Activated naive CD4-positive, alpha-beta T cell treated with anti-CD3 and anti-CD28 coated beads for 36 hours (primary cell): ENCODE measurements at regions of chr11 and their contacts with region 1.

Region 1: DNA sequence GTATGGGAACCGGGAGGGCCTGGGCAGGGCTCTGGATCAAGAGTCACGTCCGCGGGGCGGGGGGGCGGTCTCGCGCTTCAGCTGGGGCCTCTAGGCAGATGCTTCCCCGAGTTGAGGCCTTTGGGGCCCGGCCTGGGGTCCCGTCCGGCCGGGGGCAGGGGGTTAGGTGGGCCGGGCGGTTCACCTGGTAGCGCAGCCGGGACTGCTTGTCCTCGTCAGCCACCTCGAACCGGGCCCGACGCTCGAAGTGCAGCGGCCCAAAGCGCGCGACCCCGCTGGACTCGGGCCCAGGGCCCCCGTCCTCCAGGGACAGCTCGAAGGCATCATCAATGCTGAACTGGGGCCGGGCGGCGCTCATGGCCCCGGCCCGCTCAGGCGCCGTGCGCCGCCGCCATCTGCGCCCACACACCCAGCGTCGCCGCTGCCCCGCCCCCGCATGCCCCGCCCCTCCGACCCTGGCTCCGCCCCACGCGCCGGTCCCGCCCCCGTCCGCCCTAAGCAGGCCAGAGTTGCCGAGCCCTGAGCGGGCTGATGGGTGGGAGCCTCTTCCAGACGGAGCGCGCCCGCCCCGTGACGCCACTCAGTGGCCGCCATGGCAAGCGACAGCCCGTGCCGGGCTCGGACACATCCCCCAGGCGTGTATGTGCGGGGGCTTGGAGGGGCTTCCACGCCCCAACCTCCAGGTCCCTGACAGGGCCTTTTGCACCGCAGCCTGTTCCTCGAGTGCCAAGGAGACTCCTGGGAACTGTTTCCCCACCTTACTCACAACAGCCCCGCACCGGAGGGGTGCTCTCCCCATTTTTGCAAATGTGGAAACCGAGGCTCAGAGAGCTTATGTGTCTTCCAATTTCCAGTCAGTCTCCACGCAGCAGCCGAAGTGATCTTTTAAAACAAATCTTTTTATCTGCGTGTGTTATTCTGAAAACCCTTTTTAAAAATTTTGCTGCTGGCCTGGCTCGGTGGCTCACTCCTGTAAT is at the start of gene TMEM134:
- DNase-seq: peak; percentile 92
- H3K4me3 Mint-ChIP-seq: peak within 1 kb of the TSS; percentile 80
- H3K27ac Mint-ChIP-seq: peak within 1 kb of the TSS; percentile 86
- H3K4me1 Mint-ChIP-seq: peaks cover 33% of the 10 kb centered on the region
- H3K27me3 Mint-ChIP-seq: no peaks in the 10 kb centered on the region
- total RNA-seq, gene TMEM134: 52.6 to 56.1 TPM

Region 2: GRCh38 chr11:67391304-67392132 is 77.6 kb before region 1 on chr11 and contains the start of gene RAD9A:
- CTCF ChIA-PET with region 1: interaction called, 3 read pairs
- intact Hi-C with region 1: loop called (anchors 1 kb)
- DNase-seq: peak; percentile 93
- H3K4me3 Mint-ChIP-seq: peak within 1 kb of the TSS; percentile 86
- H3K27ac Mint-ChIP-seq: peak within 1 kb of the TSS; percentile 51
- H3K4me1 Mint-ChIP-seq: peaks cover 31% of the 10 kb centered on the region
- H3K27me3 Mint-ChIP-seq: no peaks in the 10 kb centered on the region
- total RNA-seq, gene RAD9A: 29.5 to 30.7 TPM

Region 3: GRCh38 chr11:67428052-67428914 is 40.8 kb before region 1 on chr11 and contains the start of gene RPS6KB2:
- CTCF ChIA-PET with region 1: no interaction called
- intact Hi-C with region 1: loop called (anchors 2 kb)
- DNase-seq: peak; percentile 100
- H3K4me3 Mint-ChIP-seq: peak within 1 kb of the TSS; percentile 98
- H3K27ac Mint-ChIP-seq: peak within 1 kb of the TSS; percentile 97
- H3K4me1 Mint-ChIP-seq: peaks cover 34% of the 10 kb centered on the region
- H3K27me3 Mint-ChIP-seq: no peaks in the 10 kb centered on the region
- total RNA-seq, gene RPS6KB2: 50.7 to 51.2 TPM

Region 4: DNA sequence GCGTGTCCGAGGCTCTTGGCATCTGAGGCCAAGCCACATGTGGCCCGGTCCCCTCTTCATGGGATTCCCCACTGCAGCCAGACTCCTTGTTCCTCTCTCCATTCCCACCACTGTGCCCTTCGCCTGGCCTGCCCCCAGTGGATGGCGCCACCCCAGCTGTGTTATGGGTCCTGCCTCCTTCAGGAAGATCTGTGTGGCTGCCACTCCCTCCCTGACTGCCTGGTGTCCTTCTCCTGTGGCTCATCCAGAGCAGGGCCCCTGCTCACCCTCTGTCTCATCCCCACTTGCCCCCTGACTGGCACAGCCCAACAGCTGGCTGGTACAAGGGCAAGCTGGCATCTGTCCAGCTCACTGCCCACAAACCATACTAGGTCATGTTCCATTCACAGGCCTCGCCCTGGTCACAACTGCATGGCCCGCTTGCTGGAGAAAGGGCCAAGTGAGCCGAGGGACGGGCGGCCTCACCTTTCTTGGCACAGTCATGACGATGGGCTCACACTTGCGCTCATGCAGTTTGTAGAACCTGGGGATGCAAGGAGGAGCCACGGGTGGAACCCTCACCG is 29.7 kb before region 1 on chr11:
- CTCF ChIA-PET with region 1: interaction called, 20 read pairs
- intact Hi-C with region 1: loop called (anchors 1 kb)
- DNase-seq: peak; percentile 77
- H3K4me3 Mint-ChIP-seq: peak overlapping the region; percentile 90
- H3K27ac Mint-ChIP-seq: peak overlapping the region; percentile 95
- H3K4me1 Mint-ChIP-seq: peaks cover 55% of the 10 kb centered on the region
- H3K27me3 Mint-ChIP-seq: no peaks in the 10 kb centered on the region

Region 5: GRCh38 chr11:67447848-67448609 is 21.1 kb before region 1 on chr11:
- CTCF ChIA-PET with region 1: no interaction called
- intact Hi-C with region 1: loop called (anchors 2 kb)
- DNase-seq: no peak
- H3K4me3 Mint-ChIP-seq: no peak overlapping the region
- H3K27ac Mint-ChIP-seq: peak overlapping the region; percentile 41
- H3K4me1 Mint-ChIP-seq: peaks cover 63% of the 10 kb centered on the region
- H3K27me3 Mint-ChIP-seq: no peaks in the 10 kb centered on the region

Region 6: DNA sequence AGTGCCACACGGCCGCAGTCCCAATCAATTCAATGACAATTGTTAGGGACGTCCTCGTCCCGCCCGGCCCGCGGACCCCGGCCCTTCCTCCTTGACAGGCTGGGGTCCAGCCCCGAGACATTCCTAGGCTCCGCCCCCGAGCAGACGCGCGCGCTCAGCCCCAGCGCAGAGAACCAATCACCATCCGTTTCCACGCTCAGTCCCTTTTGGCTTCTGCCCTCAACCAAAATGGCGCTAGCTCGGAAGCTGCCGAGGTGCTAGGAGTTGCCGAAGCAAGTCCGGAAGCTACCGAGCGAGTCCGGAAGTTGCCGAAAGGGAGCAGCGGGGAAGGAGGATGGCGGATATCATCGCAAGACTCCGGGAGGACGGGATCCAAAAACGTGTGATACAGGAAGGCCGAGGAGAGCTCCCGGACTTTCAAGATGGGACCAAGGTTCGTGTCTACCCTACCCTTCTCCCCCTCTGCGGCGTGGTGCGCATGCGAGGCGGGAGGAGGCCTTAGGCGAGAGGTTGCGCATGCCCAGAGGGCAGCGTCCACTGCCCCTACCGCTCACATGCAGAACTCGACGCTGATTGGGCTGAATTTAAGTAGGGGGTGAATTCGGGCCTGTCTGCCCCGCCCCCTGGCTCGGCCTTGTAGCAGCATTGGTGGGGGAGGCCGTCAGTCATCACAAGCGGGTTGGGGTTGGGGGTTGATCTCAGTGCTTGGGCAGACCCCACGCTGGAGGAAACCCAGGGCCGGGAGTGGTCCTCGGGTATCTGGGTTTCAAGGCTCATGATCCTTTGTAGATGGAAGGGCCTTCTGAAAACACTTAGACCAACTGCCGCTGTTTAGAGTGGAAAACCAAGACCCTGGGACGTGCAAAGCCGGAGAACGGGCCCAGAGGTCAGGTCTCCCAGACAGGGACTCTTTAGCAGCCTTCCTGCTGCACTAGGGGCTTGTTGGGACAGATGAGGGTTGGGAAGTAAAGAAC is 14.0 kb after region 1 on chr11 and contains the start of gene AIP:
- CTCF ChIA-PET with region 1: interaction called, 6 read pairs
- intact Hi-C with region 1: loop called (anchors 1 kb)
- DNase-seq: peak; percentile 99
- H3K4me3 Mint-ChIP-seq: peak within 1 kb of the TSS; percentile 94
- H3K27ac Mint-ChIP-seq: peak within 1 kb of the TSS; percentile 99
- H3K4me1 Mint-ChIP-seq: peaks cover 34% of the 10 kb centered on the region
- H3K27me3 Mint-ChIP-seq: no peaks in the 10 kb centered on the region
- total RNA-seq, gene AIP: 163 to 166 TPM

Region 7: GRCh38 chr11:67583247-67584204 is 114.4 kb after region 1 on chr11 and contains the start of gene GSTP1:
- CTCF ChIA-PET with region 1: no interaction called
- intact Hi-C with region 1: no loop called
- DNase-seq: peak; percentile 81
- H3K4me3 Mint-ChIP-seq: peak within 1 kb of the TSS; percentile 94
- H3K27ac Mint-ChIP-seq: peak within 1 kb of the TSS; percentile 85
- H3K4me1 Mint-ChIP-seq: peaks cover 47% of the 10 kb centered on the region
- H3K27me3 Mint-ChIP-seq: peaks cover 3% of the 10 kb centered on the region
- total RNA-seq, gene GSTP1: 398 to 403 TPM